ENCODE measurements at regions of chr11 and their contacts with region 1.

Region 1: DNA sequence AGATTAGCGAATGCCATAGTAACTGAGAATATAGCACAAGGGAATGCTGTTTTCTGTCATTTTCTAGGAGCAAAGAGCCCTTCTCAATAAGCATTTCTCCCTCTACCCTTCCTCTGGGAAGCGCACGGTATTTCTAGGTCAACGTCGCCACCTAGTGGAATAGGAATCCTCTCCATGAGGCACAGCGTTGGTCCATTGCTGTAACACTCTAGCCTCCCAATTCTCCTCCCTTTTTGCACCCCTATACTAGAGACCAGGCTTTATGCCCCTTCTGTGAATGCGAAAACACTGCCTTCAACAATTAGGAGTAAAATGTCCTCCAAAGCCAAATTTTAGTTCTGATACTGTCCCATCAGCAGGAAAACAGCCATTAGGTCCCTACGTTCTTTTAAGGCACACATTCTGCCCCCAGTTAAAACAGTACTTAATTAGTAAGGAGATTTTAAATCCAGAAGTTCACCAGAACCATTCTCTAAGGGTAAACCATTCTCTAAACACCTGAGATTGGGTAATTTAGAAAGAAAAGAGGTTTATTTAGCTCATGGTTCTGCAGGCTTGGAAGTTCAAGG is 12.8 kb upstream of the HYLS1 start:
- DNase-seq: peak; percentile 37 to 86 (median 58)
- ATAC-seq: peak; percentile 98
- H3K4me3 ChIP-seq: no peak overlapping the region
- H3K27ac ChIP-seq: no peak overlapping the region; the same call in 2 of the 3 replicates
- H3K4me1 ChIP-seq: peaks cover 0 to 3% of the 10 kb centered on the region in 2 experiments; a peak in 2 of 5 replicates
- H3K27me3 ChIP-seq: peaks cover 0 to 7% of the 10 kb centered on the region in 2 experiments; a peak in 2 of 5 replicates
- CTCF ChIP-seq: peak; percentile 81 to 89 (median 84)
- EP300 ChIP-seq: no peak
- POLR2A ChIP-seq: no peak
- RAD21 ChIP-seq: peak; percentile 89 to 92

Region 2: DNA sequence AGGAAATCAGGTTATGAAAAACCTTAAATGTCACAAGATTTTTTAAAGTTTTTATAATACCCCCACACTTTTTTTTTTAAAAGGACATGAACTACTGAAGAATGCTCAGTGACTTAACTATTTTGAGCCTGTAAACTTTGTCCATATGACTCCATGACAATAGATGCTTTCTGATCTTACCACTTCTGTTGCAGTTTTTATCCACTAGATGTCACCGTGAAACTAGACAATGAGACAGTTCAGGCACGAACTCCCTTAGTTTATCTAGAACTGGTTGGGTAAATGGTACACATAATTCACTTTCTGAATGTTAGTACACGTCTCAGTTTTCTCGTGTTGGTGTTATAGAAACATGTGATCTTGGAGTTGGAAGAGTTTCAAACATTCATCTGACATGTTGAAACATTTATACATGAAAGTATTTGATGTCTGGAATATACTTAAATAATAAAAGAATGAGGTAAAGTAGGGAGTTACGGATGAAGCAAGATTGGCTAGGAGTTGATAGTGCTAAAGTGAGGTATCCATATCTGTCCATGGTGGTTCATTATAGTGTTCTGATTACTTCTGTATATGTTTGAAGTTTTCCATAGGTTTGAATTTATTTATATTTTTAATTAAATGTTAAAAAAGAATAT is 912.5 kb before region 1 on chr11:
- CTCF ChIA-PET with region 1: interaction called, 3 read pairs
- POLR2A ChIA-PET with region 1: no interaction called
- in situ Hi-C with region 1: loop called (anchors 25 kb)
- intact Hi-C with region 1: loop called (anchors 5 kb)
- DNase-seq: peak; percentile 41 to 77 (median 54)
- ATAC-seq: peak; percentile 96
- H3K4me3 ChIP-seq: no peak overlapping the region
- H3K27ac ChIP-seq: no peak overlapping the region
- H3K4me1 ChIP-seq: no peaks in the 10 kb centered on the region
- H3K27me3 ChIP-seq: no peaks in the 10 kb centered on the region
- CTCF ChIP-seq: peak; percentile 67 to 89 (median 72)
- EP300 ChIP-seq: no peak
- POLR2A ChIP-seq: no peak
- RAD21 ChIP-seq: peak; percentile 95 to 96

Region 3: GRCh38 chr11:125429166-125429707 is 445.4 kb before region 1 on chr11:
- CTCF ChIA-PET with region 1: no interaction called
- POLR2A ChIA-PET with region 1: no interaction called
- in situ Hi-C with region 1: loop called (anchors 10 kb)
- intact Hi-C with region 1: loop called (anchors 2 kb)
- DNase-seq: peak; percentile 70 to 80 (median 76)
- ATAC-seq: peak; percentile 80
- H3K4me3 ChIP-seq: no peak overlapping the region; the same call in 1 of the 2 replicates
- H3K27ac ChIP-seq: no peak overlapping the region
- H3K4me1 ChIP-seq: peaks cover 7% of the 10 kb centered on the region in 2 experiments; a peak in 4 of 5 replicates
- H3K27me3 ChIP-seq: peaks cover 5 to 32% of the 10 kb centered on the region in 2 experiments; a peak in 4 of 5 replicates
- CTCF ChIP-seq: peak; percentile 84 to 88 (median 86)
- EP300 ChIP-seq: no peak
- POLR2A ChIP-seq: no peak
- RAD21 ChIP-seq: peak; percentile 49 to 66

Region 4: DNA sequence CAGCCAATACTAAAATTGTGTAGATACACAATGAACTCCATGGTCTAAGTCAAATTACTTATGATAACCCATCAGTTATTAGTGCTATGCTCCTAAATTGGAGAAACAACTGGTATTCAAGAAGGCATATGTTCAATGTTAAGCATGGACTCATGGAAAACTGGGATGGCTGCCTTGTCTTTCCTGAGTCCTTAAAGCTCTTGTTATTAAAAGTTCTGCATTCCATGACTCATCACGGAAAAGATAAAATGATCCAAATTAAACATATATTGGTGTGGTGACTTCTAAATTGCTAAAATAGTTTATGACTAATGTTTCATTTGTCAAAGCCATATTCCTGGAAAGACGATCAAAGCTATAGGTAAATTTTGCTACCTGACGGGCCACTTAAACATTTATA is 314.8 kb before region 1 on chr11:
- CTCF ChIA-PET with region 1: no interaction called
- POLR2A ChIA-PET with region 1: no interaction called
- in situ Hi-C with region 1: loop called (anchors 10 kb)
- intact Hi-C with region 1: no loop called
- DNase-seq: no peak
- ATAC-seq: no peak
- H3K4me3 ChIP-seq: no peak overlapping the region
- H3K27ac ChIP-seq: no peak overlapping the region
- H3K4me1 ChIP-seq: peaks cover 7 to 21% of the 10 kb centered on the region in 2 experiments
- H3K27me3 ChIP-seq: no peaks in the 10 kb centered on the region
- CTCF ChIP-seq: no peak
- EP300 ChIP-seq: no peak
- POLR2A ChIP-seq: no peak
- RAD21 ChIP-seq: no peak

Region 5: GRCh38 chr11:125701858-125702621 is 172.6 kb before region 1 on chr11:
- CTCF ChIA-PET with region 1: no interaction called
- POLR2A ChIA-PET with region 1: no interaction called
- in situ Hi-C with region 1: no loop called
- intact Hi-C with region 1: no loop called
- DNase-seq: no peak
- ATAC-seq: no peak
- H3K4me3 ChIP-seq: no peak overlapping the region
- H3K27ac ChIP-seq: no peak overlapping the region
- H3K4me1 ChIP-seq: no peaks in the 10 kb centered on the region; a peak in 1 of 5 replicates
- H3K27me3 ChIP-seq: peaks cover 0 to 29% of the 10 kb centered on the region in 2 experiments; a peak in 2 of 5 replicates
- CTCF ChIP-seq: no peak
- EP300 ChIP-seq: no peak
- POLR2A ChIP-seq: no peak
- RAD21 ChIP-seq: no peak

Region 6: GRCh38 chr11:125772834-125773505 is 101.7 kb before region 1 on chr11:
- CTCF ChIA-PET with region 1: no interaction called
- POLR2A ChIA-PET with region 1: no interaction called
- in situ Hi-C with region 1: no loop called
- intact Hi-C with region 1: loop called (anchors 5 kb)
- DNase-seq: no peak
- ATAC-seq: no peak
- H3K4me3 ChIP-seq: no peak overlapping the region
- H3K27ac ChIP-seq: no peak overlapping the region
- H3K4me1 ChIP-seq: no peaks in the 10 kb centered on the region
- H3K27me3 ChIP-seq: peaks cover 12 to 16% of the 10 kb centered on the region in 2 experiments
- CTCF ChIP-seq: no peak
- EP300 ChIP-seq: no peak
- POLR2A ChIP-seq: no peak
- RAD21 ChIP-seq: no peak

Measured in K562 (cell line).